Activated CD4-positive, alpha-beta memory T cell treated with anti-CD3 and anti-CD28 coated beads for 36 hours (primary cell): ENCODE measurements at regions of chr10 and their contacts with region 1.

Region 1: DNA sequence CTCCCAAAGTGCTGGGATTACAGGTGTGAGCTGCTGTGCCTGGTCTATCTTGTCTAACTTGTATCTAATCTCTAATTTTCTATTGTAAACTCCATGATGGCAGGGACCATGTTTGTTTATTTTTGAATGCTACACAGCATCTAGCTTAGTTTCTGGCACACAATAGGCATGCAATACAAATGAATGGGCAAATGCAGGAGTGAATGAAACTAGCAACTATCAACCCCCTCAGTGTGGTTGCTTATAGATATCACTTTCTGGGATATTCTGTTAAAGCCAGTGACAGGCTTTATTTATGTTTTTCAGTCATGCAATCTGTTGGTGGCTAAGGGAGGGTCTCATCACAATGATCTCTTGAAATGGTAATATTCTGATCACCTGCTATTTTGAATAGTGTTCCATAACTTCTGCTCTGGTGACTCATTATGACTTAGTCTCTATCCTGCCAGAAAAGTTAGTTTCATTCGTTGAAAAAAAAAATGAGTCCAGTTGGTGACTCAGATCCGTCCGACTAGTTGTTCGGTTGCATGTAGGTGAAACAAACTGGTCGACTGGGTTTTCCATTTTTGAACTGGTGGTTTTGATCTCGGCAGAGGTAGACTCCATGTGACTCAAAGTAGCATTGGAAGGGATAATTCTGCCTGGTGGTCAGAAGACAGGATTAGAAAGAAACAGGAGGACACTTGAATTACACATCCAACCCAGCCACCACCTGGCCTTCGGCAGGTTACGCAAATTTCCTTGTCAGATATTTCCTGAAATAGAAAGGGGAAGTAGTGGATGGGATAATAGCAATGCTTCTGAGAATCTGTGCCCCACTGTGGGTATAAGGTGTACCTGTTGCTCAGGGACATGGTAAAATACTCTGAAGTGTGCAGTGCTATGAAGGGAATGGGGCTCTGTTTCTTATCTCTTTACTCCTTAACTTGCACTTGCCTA is 76.8 kb downstream of the GATA3 start:
- DNase-seq: peak; percentile 71
- H3K4me3 Mint-ChIP-seq: peak overlapping the region; percentile 38
- H3K27ac Mint-ChIP-seq: peak overlapping the region; percentile 50
- H3K4me1 Mint-ChIP-seq: peaks cover 42% of the 10 kb centered on the region
- H3K27me3 Mint-ChIP-seq: peaks cover 9% of the 10 kb centered on the region

Region 2: DNA sequence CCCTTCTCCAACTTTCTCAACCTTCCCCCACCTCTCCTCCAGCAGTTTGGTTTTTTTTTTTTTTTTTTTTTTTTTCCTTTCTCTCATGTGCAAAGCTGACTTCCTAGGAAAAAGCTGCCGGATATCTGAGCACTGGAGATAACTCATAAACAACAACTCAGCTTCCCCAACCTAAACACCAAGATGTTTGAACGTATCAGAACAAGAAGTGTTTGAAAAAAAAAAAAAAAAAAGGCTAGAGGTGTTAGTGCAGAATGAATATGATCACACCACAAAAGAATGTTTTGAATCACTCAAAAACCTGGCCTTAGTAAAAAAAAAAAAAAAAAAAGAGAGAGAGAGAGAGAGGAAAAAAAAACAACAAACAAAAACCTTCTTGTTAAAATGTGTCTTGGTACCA is 65.6 kb before region 1 on chr10:
- CTCF ChIA-PET with region 1: interaction called, 10 read pairs
- POLR2A ChIA-PET with region 1: interaction called, 10 read pairs
- intact Hi-C with region 1: loop called (anchors 1 kb)
- DNase-seq: no peak
- H3K4me3 Mint-ChIP-seq: peak overlapping the region; percentile 54
- H3K27ac Mint-ChIP-seq: peak overlapping the region; percentile 91
- H3K4me1 Mint-ChIP-seq: peaks cover 96% of the 10 kb centered on the region
- H3K27me3 Mint-ChIP-seq: no peaks in the 10 kb centered on the region

Region 3: GRCh38 chr10:8245131-8245813 is 114.0 kb after region 1 on chr10:
- CTCF ChIA-PET with region 1: no interaction called
- POLR2A ChIA-PET with region 1: no interaction called
- intact Hi-C with region 1: loop called (anchors 1 kb)
- DNase-seq: no peak
- H3K4me3 Mint-ChIP-seq: peak overlapping the region; percentile 18
- H3K27ac Mint-ChIP-seq: peak overlapping the region; percentile 82
- H3K4me1 Mint-ChIP-seq: peaks cover 51% of the 10 kb centered on the region
- H3K27me3 Mint-ChIP-seq: no peaks in the 10 kb centered on the region

Region 4: DNA sequence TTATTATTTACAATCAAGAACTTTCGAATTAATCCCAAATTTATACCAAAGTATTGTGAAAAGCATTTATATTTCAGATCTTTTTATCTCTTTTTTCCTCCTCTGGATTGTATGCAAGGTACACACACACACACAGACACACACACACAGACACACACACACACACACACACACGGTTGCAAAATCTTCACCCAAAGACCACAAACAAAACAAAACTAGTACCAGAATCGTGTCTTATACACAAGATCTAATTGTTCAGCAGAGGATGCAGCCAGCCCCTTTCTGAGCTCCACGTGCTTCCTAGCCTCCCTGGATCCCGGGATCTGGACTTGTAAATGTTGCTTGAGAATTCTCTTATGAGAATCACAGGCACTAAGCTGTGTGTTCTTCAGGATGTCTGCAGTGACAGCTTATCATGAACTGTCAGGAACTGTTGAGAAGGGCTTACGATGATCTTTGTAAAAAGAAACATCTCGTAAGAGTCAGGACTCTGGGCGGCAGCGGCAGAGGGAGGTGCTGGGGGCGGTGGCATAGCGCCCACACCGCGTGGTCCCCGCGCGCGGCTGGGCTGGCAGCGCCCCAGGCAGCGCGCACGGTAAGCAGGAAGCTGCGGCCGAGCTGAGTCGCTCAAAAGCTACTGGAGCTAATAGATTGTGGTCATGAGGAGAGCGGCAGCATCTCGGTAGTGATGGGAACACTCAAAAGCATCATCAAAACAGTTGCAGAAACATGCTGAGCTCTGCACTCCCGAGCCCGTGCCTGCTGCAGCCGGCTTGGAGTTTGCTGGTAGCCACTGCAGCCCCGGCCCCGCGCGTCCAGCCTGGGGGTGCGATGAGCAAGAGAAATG is 200.9 kb after region 1 on chr10:
- CTCF ChIA-PET with region 1: no interaction called
- POLR2A ChIA-PET with region 1: interaction called, 11 read pairs
- intact Hi-C with region 1: no loop called
- DNase-seq: peak; percentile 90
- H3K4me3 Mint-ChIP-seq: peak overlapping the region; percentile 72
- H3K27ac Mint-ChIP-seq: peak overlapping the region; percentile 79
- H3K4me1 Mint-ChIP-seq: peaks cover 72% of the 10 kb centered on the region
- H3K27me3 Mint-ChIP-seq: no peaks in the 10 kb centered on the region

Region 5: GRCh38 chr10:9018195-9019173 is 887.2 kb after region 1 on chr10:
- CTCF ChIA-PET with region 1: no interaction called
- POLR2A ChIA-PET with region 1: no interaction called
- intact Hi-C with region 1: loop called (anchors 5 kb)
- DNase-seq: no peak
- H3K4me3 Mint-ChIP-seq: peak overlapping the region; percentile 36
- H3K27ac Mint-ChIP-seq: peak overlapping the region; percentile 76
- H3K4me1 Mint-ChIP-seq: peaks cover 41% of the 10 kb centered on the region
- H3K27me3 Mint-ChIP-seq: peaks cover 10% of the 10 kb centered on the region